Calu3 (cell line): ENCODE measurements at regions of chr19 and their contacts with region 1.

Region 1: GRCh38 chr19:29694669-29695627 is 20.1 kb downstream of the C19orf12 start:
- DNase-seq: peak; percentile 77
- H3K4me3 Mint-ChIP-seq: no peak overlapping the region
- H3K27ac Mint-ChIP-seq: no peak overlapping the region
- H3K4me1 Mint-ChIP-seq: no peaks in the 10 kb centered on the region
- H3K27me3 Mint-ChIP-seq: no peaks in the 10 kb centered on the region
- CTCF ChIP-seq: peak; percentile 79

Region 2: DNA sequence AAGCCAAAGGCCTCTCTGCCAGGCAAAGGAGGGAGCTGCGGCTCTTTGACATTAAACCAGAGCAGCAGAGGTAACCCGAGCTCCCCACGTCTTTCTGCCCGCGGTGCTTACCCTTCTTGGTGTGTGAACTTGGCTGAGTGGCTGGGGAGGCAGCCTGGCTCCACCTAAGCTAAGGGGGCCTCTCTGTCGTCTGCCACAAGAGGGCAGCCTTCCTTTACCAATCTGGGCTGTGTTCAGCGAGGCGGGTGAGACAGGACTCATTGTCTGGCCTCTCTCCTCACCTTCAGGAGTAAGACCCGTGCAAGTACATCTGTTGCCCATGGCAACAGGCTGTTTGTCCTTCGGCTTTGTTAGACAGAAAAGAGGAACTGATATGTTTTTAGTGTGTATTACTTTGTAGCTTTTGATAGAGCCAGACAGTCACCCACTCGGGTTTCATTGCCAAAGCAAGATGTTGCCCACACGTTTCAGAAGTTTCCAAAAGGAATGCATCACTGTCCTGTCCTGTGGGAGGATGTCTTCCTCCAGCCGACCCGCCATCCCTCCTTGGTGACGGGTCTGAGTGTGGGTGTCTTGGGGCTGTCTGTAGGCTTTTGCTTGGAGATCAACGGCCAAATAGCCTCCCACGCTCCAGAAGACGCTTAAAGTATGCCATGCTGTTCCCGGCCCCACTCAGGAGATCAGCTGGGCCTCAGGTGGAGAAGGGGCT is 84.2 kb before region 1 on chr19:
- CTCF ChIA-PET with region 1: no interaction called
- intact Hi-C with region 1: loop called (anchors 1 kb)
- DNase-seq: peak; percentile 81
- H3K4me3 Mint-ChIP-seq: no peak overlapping the region
- H3K27ac Mint-ChIP-seq: no peak overlapping the region
- H3K4me1 Mint-ChIP-seq: no peaks in the 10 kb centered on the region
- H3K27me3 Mint-ChIP-seq: no peaks in the 10 kb centered on the region
- CTCF ChIP-seq: peak; percentile 69

Region 3: DNA sequence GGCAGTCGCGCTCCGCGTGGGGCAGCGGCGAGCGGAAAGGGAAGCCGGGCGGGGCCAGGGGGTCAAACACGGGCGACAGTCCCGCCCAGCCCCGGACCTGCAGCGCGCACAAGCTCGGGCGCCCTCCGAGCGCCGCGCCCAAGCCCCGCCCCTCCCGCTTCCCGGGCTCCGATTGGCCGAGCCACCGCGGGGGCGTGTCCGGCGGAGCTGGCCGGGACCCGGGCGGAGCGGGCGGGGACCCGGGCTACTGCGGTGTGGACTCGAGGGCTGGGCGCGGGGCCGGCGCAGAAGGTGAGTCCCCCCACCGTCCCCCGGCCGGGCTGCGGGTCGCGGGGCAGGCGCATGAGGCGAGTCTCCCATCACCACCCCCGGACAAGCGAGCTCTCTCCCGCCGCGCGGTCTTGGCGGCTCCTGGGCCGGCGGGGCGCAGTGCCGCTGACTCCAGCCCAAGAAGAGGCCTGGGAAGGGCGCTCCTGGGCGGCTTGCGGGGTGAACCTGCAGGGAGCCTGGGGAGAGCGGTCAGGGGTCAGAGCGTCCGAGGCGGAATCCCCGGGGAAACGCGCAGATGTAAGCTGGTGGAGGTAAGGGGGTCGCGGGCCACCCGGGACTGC is 29.6 kb before region 1 on chr19 and contains the start of gene PLEKHF1:
- CTCF ChIA-PET with region 1: no interaction called
- intact Hi-C with region 1: no loop called
- DNase-seq: peak; percentile 93
- H3K4me3 Mint-ChIP-seq: peak within 1 kb of the TSS; percentile 81
- H3K27ac Mint-ChIP-seq: peak within 1 kb of the TSS; percentile 11
- H3K4me1 Mint-ChIP-seq: no peaks in the 10 kb centered on the region
- H3K27me3 Mint-ChIP-seq: no peaks in the 10 kb centered on the region
- CTCF ChIP-seq: no peak
- total RNA-seq, gene PLEKHF1: 2.4 and 2.9 TPM in 2 replicates

Region 4: DNA sequence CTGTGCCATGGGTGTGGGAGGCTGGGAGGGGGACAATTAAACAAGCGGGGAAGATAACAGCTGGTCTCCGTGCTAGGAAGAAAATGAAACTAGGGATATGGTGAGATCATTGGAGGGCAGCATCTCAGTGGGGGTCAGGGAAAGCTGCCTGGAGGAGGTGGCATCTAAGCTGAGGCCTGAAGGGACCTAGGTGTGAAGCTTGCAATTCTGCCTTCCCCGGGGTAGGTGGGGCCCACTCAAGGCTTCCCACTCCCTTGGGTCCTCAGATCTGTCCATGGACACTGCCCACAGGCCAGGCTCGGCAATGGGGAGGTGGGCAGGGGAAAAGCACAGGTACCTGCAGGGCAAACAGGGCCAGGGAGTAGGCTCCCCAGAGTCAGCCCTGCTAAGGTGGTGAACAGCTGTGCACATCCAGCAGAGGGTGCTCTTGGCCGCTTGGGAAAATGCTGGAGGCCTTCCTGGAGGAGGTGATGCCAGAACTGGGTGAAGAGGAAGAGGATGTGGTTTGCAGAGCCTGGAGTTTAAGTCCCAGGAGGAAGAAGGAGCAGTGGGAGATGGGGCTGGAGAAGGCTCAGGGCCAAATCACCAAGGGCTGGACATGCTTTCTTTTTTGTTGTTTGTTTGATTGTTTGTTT is 91.1 kb after region 1 on chr19:
- CTCF ChIA-PET with region 1: no interaction called
- intact Hi-C with region 1: no loop called
- DNase-seq: peak; percentile 24
- H3K4me3 Mint-ChIP-seq: no peak overlapping the region
- H3K27ac Mint-ChIP-seq: no peak overlapping the region
- H3K4me1 Mint-ChIP-seq: no peaks in the 10 kb centered on the region
- H3K27me3 Mint-ChIP-seq: peaks cover 49% of the 10 kb centered on the region
- CTCF ChIP-seq: no peak